Prostate gland (tissue), 2 donors: ENCODE measurements at regions of chr5 and their contacts with region 1.

Region 1: DNA sequence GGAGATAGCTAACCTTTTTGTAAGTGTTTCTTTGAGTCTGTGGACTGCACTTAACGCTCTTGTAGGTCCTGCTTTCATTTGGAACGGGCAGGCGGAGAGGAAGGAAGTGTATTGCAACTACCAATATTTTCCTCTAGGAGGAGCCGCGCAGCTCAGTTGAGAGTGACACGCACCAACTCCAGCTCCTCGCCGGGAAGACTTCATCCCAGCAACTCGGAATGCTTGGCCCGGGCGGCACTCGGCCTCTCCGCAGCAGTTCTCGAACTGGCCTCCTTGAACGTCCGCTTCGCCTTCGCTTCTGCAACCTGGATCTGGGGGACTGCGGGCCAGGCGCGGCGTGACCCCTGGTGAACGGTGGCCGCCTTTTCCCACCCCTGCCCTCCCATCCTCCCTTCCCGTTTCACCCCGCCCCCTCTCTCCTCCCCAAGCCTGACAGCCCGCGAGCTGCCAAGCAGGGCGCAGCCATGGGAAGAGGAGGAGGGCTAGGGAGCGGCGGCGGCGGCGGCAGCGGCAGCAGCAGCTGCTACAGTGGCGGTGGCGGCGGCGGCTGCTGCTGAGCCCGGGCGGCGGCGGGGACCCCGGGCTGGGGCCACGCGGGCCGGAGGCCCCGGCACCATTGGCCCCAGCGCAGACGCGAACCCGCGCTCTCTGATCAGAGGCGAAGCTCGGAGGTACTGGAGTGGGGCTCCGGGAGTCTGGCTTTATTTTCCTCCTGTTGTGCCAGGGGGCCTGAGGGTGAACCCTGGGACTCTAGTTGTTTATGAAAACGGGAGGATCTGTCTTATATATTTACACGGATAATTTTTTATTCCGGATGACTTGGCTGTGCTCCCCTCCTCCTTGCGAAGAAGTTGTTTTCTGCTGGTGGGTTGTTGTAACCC is at the start of gene GHR:
- DNase-seq: peak; percentile 91
- H3K4me3 ChIP-seq: peak within 1 kb of the TSS; percentile 60 to 76
- H3K27ac ChIP-seq: peak within 1 kb of the TSS; percentile 81 to 92
- H3K4me1 ChIP-seq: peaks cover 3% of the 10 kb centered on the region
- H3K27me3 ChIP-seq: no peaks in the 10 kb centered on the region
- CTCF ChIP-seq: peak; percentile 46 to 92 (median 84)
- POLR2A ChIP-seq: no peak
- total RNA-seq, gene GHR: 11.8 to 15.5 TPM

Region 2: GRCh38 chr5:42583322-42583721 is 159.8 kb after region 1 on chr5:
- intact Hi-C with region 1: loop called (anchors 2 kb)
- DNase-seq: peak; percentile 78
- H3K4me3 ChIP-seq: no peak overlapping the region
- H3K27ac ChIP-seq: no peak overlapping the region
- H3K4me1 ChIP-seq: no peaks in the 10 kb centered on the region
- H3K27me3 ChIP-seq: no peaks in the 10 kb centered on the region
- CTCF ChIP-seq: peak; percentile 61 to 84 (median 82)
- POLR2A ChIP-seq: no peak

Region 3: DNA sequence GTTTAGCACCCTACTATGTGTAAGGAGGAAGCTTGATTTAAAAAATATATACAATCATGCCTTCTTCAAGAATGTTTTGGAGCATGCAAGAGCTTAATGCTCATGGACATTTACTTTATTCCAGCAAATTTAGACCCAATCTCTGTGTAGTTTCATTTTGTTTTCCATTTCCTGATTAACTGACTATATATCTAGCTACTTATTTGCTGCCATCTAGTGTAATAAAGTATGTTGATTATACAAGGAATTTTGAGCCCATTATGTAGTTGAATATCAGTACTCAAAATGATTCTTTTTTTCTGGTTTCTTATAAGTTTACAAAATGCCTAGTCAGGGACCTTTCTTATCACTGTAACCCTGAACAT is 233.1 kb after region 1 on chr5:
- intact Hi-C with region 1: loop called (anchors 10 kb)
- DNase-seq: no peak
- H3K4me3 ChIP-seq: no peak overlapping the region
- H3K27ac ChIP-seq: no peak overlapping the region
- H3K4me1 ChIP-seq: no peaks in the 10 kb centered on the region
- H3K27me3 ChIP-seq: no peaks in the 10 kb centered on the region
- CTCF ChIP-seq: peak in 3 of 4 experiments; percentile 15 to 44 (median 27)
- POLR2A ChIP-seq: no peak

Region 4: GRCh38 chr5:42767491-42768105 is 344.1 kb after region 1 on chr5:
- intact Hi-C with region 1: loop called (anchors 5 kb)
- DNase-seq: no peak
- H3K4me3 ChIP-seq: no peak overlapping the region
- H3K27ac ChIP-seq: no peak overlapping the region
- H3K4me1 ChIP-seq: no peaks in the 10 kb centered on the region
- H3K27me3 ChIP-seq: no peaks in the 10 kb centered on the region
- CTCF ChIP-seq: peak; percentile 13 to 69 (median 53)
- POLR2A ChIP-seq: no peak